ENCODE measurements at regions of chr9 and their contacts with region 1.

Region 1: GRCh38 chr9:97710356-97711222 is 13.4 kb upstream of the XPA start:
- DNase-seq: peak; percentile 64
- ATAC-seq: peak; percentile 95
- H3K4me3 Mint-ChIP-seq: no peak overlapping the region
- H3K27ac Mint-ChIP-seq: no peak overlapping the region
- H3K4me1 Mint-ChIP-seq: peaks cover 23% of the 10 kb centered on the region
- H3K27me3 Mint-ChIP-seq: peaks cover 8% of the 10 kb centered on the region

Region 2: DNA sequence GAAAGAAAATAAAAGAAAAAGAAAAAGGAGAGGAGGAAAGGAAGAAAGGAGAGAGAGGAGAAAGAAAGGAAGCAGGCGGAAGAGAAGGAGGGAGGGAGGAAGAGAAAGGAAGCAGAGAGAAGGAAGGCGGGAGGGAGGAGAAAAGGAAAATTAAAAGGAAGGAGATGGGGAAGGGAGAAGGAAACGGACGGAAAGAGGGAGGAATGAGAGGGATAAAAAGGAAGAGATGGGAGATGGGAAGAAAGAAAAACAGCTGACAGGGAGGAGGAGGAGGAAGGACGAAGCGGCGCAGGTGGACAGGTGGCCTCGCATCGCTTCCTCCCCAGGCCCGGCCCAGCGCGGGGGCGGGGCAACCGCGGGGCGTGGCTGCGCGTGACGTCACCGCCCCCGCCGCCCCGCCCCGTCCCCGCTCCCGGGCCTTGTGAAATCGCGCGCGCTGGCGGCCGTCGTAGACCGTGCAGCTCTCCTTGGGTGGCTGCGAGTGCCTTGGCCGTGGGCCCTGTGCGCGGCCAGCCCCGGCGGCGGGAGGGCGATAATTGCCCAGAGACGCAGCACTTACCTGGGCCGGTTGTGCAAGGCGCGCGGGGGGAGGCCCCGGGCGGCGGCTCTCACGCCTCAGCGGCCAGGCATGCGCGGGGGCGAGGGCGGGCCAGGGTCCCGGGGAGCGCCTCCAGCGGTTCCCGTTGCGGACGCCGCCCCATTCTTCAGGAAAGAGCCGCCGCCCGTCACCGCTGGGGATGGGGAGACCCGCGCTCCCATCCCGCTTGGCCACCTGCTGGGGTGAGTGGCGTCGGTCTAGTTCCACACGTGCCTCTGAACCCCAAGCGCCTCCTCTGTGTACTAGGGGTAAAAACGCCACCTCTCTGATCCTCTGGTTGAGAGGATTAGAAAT is 92.8 kb after region 1 on chr9:
- CTCF ChIA-PET with region 1: no interaction called
- POLR2A ChIA-PET with region 1: no interaction called
- intact Hi-C with region 1: loop called (anchors 2 to 10 kb)
- DNase-seq: peak; percentile 86
- ATAC-seq: peak; percentile 90
- H3K4me3 Mint-ChIP-seq: peak overlapping the region; percentile 72
- H3K27ac Mint-ChIP-seq: peak overlapping the region; percentile 67
- H3K4me1 Mint-ChIP-seq: peaks cover 10% of the 10 kb centered on the region
- H3K27me3 Mint-ChIP-seq: peaks cover 21% of the 10 kb centered on the region

Region 3: GRCh38 chr9:97853844-97854695 is 143.5 kb after region 1 on chr9:
- CTCF ChIA-PET with region 1: no interaction called
- POLR2A ChIA-PET with region 1: no interaction called
- intact Hi-C with region 1: loop called (anchors 1 to 2 kb)
- DNase-seq: peak; percentile 85
- ATAC-seq: peak; percentile 88
- H3K4me3 Mint-ChIP-seq: peak overlapping the region; percentile 82
- H3K27ac Mint-ChIP-seq: no peak overlapping the region
- H3K4me1 Mint-ChIP-seq: peaks cover 23% of the 10 kb centered on the region
- H3K27me3 Mint-ChIP-seq: peaks cover 74% of the 10 kb centered on the region

Region 4: GRCh38 chr9:97900738-97901565 is 190.4 kb after region 1 on chr9:
- CTCF ChIA-PET with region 1: interaction called, 6 read pairs
- POLR2A ChIA-PET with region 1: interaction called, 3 read pairs
- intact Hi-C with region 1: loop called (anchors 1 to 5 kb)
- DNase-seq: no peak
- ATAC-seq: no peak
- H3K4me3 Mint-ChIP-seq: no peak overlapping the region
- H3K27ac Mint-ChIP-seq: peak overlapping the region; percentile 56
- H3K4me1 Mint-ChIP-seq: peaks cover 53% of the 10 kb centered on the region
- H3K27me3 Mint-ChIP-seq: no peaks in the 10 kb centered on the region

Region 5: GRCh38 chr9:97954550-97954989 is 244.0 kb after region 1 on chr9:
- CTCF ChIA-PET with region 1: no interaction called
- POLR2A ChIA-PET with region 1: no interaction called
- intact Hi-C with region 1: loop called in 1 of 2 experiments (anchors 1 kb)
- DNase-seq: peak; percentile 69
- ATAC-seq: peak; percentile 90
- H3K4me3 Mint-ChIP-seq: no peak overlapping the region
- H3K27ac Mint-ChIP-seq: no peak overlapping the region
- H3K4me1 Mint-ChIP-seq: peaks cover 9% of the 10 kb centered on the region
- H3K27me3 Mint-ChIP-seq: no peaks in the 10 kb centered on the region

Region 6: DNA sequence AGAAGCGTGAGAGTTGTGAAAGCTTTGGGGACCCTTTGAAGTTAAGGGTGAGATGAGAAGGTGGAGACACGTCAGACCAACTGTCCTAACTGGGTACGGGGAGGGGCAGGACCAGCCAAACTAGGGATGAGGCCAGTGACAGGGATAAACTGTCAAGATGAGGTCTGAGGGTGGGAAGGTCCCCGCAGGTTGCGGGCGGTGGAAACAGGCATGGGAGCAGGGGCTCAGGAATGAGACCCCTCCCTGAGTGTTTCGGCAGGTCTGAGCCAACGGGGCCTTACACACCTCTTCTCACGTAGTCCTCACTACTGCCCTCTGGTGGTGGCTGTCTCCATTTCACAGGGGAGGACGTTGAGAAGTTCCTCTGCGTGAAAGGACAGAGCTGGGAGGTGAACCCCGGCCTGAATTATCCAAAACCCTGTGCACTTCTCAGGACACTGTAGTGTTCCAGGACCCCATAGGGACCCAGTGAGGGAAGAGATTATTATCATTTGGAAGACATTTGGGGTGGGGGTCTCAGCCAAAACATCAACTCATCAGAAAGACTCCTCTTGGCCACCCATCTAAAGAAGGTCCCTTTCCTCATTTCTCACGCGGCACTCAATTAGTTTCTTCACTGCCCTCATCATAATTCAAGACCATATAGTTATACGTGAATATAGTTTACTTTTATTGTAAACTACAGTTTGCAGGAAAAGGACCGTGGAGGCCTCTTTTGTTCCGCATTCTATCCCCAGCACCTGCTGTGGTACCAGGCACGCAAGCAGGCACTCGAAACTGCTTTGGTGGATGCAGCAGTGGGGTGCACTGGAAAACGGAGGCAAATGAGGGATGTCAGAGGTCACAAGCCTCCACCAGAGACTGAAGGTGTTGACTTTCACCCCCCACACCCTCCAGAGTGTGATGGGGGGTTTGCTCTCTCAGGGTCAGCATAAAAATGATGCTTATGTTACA is 324.3 kb after region 1 on chr9:
- CTCF ChIA-PET with region 1: no interaction called
- POLR2A ChIA-PET with region 1: no interaction called
- intact Hi-C with region 1: loop called in 1 of 2 experiments (anchors 2 kb)
- DNase-seq: peak; percentile 96
- ATAC-seq: peak; percentile 99
- H3K4me3 Mint-ChIP-seq: no peak overlapping the region
- H3K27ac Mint-ChIP-seq: peak overlapping the region; percentile 21
- H3K4me1 Mint-ChIP-seq: peaks cover 14% of the 10 kb centered on the region
- H3K27me3 Mint-ChIP-seq: no peaks in the 10 kb centered on the region

Region 7: DNA sequence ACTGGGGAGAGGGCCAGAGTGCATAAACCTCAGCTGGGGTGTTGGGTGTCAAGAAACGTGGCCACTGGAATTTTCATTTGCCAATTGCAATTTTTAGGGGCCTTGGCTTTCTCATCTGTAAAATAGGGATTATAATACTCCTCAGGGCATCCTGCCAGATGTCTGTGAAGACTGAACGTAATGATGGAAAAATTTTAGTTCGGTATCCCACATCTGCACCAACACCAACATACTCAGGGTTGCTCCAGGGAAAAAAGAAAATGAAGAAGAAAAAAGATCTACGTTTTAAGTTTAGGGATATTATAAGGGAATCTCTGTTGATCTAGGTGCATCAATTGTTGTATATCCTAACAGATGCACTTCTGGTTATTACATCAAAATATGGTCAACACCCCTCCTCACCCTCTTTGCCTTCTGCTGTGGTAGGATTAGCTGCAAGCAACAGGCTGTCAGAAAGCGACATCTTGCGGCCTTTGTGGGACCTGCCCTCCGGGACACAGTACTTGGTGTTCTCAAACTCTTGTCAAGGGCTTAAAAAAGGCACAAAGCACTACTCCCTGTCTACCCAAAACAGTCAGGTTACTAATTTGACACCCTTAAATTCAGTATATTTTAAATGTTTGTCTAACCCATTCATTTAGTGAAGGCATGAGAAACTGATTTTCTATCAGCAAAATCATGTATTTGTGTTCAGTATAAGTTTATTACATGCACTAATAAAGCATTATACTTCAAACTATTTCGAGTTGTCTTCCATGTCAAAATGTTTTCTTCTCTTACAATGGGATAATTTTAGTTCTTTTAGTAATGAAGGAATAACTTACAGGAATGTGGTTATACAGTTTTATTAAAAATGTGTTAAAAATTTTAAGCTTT is 553.1 kb after region 1 on chr9:
- CTCF ChIA-PET with region 1: no interaction called
- POLR2A ChIA-PET with region 1: no interaction called
- intact Hi-C with region 1: loop called (anchors 5 kb)
- DNase-seq: peak; percentile 91
- ATAC-seq: peak; percentile 99
- H3K4me3 Mint-ChIP-seq: no peak overlapping the region
- H3K27ac Mint-ChIP-seq: no peak overlapping the region
- H3K4me1 Mint-ChIP-seq: no peaks in the 10 kb centered on the region
- H3K27me3 Mint-ChIP-seq: no peaks in the 10 kb centered on the region